Mammary epithelial cell (primary cell): ENCODE measurements at regions of chr21 and their contacts with region 1.

Region 1: DNA sequence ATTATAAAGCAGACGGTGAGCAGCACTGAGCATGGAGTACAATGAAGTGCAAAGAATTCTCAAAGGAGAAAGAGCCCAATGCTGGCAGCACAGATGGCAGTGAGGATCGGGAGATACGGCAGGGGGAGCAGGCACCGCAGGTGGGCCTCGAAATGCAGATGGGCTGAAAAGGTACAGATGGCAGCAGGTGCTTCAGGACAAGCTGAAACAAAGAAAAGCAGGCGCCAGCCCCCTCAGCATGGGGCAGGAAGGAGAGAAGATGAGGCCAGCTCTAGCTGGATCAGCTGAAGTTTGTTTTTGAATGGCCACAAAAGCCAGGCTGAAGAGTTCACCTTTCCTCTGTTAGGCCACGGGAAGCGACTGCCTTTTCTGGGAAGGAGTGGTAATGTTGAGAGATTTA is 7.7 kb downstream of the CFAP298 start:
- DNase-seq: no peak
- H3K4me3 ChIP-seq: no peak overlapping the region
- H3K27ac ChIP-seq: no peak overlapping the region
- H3K4me1 ChIP-seq: peaks cover 10% of the 10 kb centered on the region
- H3K27me3 ChIP-seq: no peaks in the 10 kb centered on the region
- CTCF ChIP-seq: no peak

Region 2: GRCh38 chr21:31683030-31683429 is 921.4 kb before region 1 on chr21:
- CTCF ChIA-PET with region 1: no interaction called
- dilution Hi-C with region 1: no loop called
- in situ Hi-C with region 1: no loop called
- intact Hi-C with region 1: no loop called
- DNase-seq: no peak
- H3K4me3 ChIP-seq: no peak overlapping the region
- H3K27ac ChIP-seq: no peak overlapping the region
- H3K4me1 ChIP-seq: no peaks in the 10 kb centered on the region
- H3K27me3 ChIP-seq: no peaks in the 10 kb centered on the region
- CTCF ChIP-seq: no peak

Region 3: GRCh38 chr21:31781737-31782136 is 822.7 kb before region 1 on chr21:
- CTCF ChIA-PET with region 1: interaction called, 35 read pairs
- dilution Hi-C with region 1: no loop called
- in situ Hi-C with region 1: no loop called
- intact Hi-C with region 1: loop called (anchors 5 kb)
- DNase-seq: no peak
- H3K4me3 ChIP-seq: no peak overlapping the region
- H3K27ac ChIP-seq: no peak overlapping the region
- H3K4me1 ChIP-seq: no peaks in the 10 kb centered on the region
- H3K27me3 ChIP-seq: no peaks in the 10 kb centered on the region
- CTCF ChIP-seq: no peak

Region 4: DNA sequence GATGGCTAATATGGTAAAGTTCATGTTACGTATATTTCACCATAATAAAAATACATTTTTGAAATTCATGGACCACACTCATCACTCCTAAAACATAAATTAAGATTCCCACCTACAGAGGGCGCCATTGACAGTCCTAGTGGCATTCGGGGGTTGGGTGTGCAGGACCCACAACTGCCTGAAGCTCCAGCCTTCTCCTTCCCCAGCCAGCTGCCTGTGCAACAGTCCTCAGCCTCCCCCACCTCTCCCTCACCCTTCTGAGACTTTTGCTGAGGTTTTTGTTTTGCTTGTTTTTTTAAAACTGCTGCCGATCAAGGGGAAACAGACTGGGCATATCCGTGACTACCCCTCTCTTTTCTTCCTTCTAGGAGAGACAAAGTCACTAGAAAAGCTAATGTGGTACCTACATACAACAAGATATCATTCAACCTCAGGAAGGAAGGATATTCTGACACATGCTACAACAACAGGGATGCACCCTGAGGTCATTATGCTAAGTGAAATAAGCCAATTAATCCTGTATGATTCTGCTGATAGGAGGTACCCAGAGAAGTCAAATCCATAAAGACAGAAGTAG is 201.2 kb before region 1 on chr21:
- CTCF ChIA-PET with region 1: interaction called, 52 read pairs
- dilution Hi-C with region 1: loop called (anchors 5 kb)
- in situ Hi-C with region 1: loop called in 1 of 2 experiments (anchors 5 kb)
- intact Hi-C with region 1: loop called (anchors 1 kb)
- DNase-seq: peak; percentile 47
- H3K4me3 ChIP-seq: no peak overlapping the region
- H3K27ac ChIP-seq: no peak overlapping the region
- H3K4me1 ChIP-seq: no peaks in the 10 kb centered on the region
- H3K27me3 ChIP-seq: no peaks in the 10 kb centered on the region
- CTCF ChIP-seq: peak; percentile 69 to 71

Region 5: DNA sequence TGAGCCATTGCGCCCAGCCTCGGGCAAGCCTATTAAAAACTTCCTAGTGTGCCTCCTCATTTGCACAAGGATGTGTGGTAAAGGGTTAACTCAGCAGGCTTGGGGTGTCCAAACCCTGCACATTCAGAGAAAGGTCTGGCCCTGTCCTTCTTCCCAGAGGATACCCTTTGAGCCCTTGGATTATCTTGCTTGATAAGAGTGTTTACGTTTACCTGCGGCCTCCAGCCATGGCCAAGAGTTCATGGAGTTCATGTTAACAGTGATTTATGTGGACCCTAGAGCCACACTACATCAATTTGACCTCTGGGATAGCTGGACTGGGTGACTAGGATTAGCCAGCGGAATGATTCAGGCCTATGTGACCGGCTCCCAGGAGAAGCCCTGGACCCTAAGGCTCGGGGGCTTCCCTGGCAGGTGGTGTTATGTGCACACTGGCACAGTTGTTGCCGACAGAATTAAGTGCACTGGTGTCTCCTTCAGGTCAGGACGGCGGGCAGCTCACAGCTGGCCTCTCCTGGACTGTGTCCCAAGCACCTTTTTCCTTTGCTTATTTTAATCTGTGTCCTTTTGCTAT is 11.4 kb before region 1 on chr21:
- CTCF ChIA-PET with region 1: no interaction called
- dilution Hi-C with region 1: no loop called
- in situ Hi-C with region 1: no loop called
- intact Hi-C with region 1: no loop called
- DNase-seq: no peak
- H3K4me3 ChIP-seq: no peak overlapping the region
- H3K27ac ChIP-seq: no peak overlapping the region
- H3K4me1 ChIP-seq: peaks cover 15% of the 10 kb centered on the region
- H3K27me3 ChIP-seq: no peaks in the 10 kb centered on the region
- CTCF ChIP-seq: no peak

Region 6: GRCh38 chr21:32638785-32639184 is 34.3 kb after region 1 on chr21:
- CTCF ChIA-PET with region 1: no interaction called
- dilution Hi-C with region 1: no loop called
- in situ Hi-C with region 1: no loop called
- intact Hi-C with region 1: no loop called
- DNase-seq: no peak
- H3K4me3 ChIP-seq: no peak overlapping the region
- H3K27ac ChIP-seq: no peak overlapping the region
- H3K4me1 ChIP-seq: no peaks in the 10 kb centered on the region
- H3K27me3 ChIP-seq: no peaks in the 10 kb centered on the region
- CTCF ChIP-seq: no peak